Caco-2 (cell line): ENCODE measurements at regions of chr19 and their contacts with region 1.

Region 1: DNA sequence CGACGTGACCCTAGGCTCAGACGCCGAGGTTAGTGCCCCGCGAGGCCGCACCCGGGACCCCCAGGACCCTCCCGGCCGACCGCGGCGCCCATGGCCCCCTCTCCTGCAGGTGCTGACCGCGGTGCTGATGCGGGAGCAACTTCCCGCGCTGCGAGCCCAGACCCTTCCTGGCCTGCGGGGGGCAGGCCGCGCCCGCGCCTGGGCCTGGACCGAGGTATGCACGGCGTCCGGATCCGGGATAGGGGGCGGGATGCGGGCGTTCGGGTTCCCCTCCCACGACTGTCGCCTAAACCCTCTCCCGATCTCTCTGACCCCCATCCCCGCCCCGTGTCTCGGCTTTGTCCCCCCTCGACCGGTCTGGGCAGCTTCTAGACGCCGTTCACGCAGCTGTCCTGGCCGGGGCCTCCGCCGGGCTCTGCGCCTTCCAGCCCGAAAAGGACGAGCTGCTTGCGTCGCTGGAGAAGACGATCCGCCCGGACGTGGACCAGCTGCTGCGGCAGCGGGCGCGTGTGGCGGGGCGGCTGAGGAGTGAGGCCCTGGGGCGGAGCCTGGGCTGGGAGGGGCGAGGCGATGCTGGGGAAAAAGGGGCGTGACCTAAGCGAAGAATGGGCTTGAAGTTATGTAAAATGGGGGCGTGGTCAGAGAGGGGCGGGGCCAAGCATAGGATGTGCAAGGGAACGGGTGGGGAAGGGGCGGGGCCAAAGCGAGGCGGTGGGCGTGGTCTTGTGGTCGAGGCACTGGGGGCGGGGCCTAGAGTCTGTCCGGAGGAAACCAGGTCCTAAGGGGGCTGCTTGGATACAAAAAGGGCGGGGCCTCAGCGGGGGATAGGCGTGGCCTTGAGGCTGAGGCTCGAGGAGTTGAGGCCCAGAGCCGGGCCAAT is 16.0 kb upstream of the COLGALT1 start:
- DNase-seq: peak; percentile 94 to 97
- H3K4me3 ChIP-seq: peak overlapping the region; percentile 53
- H3K4me3 Mint-ChIP-seq: peak overlapping the region; percentile 80
- H3K27ac Mint-ChIP-seq: no peak overlapping the region
- H3K4me1 ChIP-seq: no peaks in the 10 kb centered on the region
- H3K4me1 Mint-ChIP-seq: peaks cover 7% of the 10 kb centered on the region
- H3K27me3 ChIP-seq: no peaks in the 10 kb centered on the region; the same call in none of the 2 replicates
- H3K27me3 Mint-ChIP-seq: no peaks in the 10 kb centered on the region
- CTCF ChIP-seq: peak; percentile 26 to 71

Region 2: DNA sequence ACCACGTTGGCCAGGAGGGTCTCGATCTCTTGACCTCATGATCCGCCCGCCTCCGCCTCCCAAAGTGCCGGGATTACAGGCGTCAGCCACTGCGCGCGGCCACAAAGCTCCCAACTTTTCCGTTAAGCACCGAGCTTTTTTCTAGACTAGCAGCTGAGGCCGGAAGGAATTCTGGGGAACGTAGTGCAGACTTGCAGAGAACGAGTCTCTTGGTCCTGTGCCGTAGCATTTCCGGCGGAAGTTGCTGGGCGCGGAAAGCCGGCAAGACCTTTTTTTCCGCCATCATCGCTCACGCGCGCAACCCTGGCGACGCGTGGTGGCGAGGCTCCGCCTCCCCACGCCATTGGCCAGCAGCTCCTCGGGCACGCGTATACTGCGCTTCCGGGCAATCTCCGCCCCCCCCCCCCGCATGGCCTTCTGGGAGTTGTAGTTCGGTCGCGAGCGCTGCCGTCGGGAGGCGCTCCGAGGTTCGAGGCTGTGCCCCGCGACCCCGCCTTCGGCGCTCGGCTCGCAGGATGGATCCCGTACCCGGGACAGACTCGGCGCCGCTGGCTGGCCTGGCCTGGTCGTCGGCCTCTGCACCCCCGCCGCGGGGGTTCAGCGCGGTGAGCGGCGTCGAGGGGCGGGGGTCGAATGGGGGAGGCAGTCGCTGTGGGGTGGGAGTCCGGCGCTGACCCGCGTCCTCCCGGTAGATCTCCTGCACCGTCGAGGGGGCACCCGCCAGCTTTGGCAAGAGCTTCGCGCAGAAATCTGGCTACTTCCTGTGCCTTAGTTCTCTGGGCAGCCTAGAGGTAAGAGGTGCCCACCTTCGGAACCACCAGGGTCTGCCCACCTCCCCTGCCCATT is 119.6 kb before region 1 on chr19 and contains the start of gene MVB12A:
- CTCF ChIA-PET with region 1: no interaction called
- POLR2A ChIA-PET with region 1: no interaction called
- intact Hi-C with region 1: no loop called
- DNase-seq: peak; percentile 95 to 97
- H3K4me3 ChIP-seq: peak within 1 kb of the TSS; percentile 85
- H3K4me3 Mint-ChIP-seq: peak within 1 kb of the TSS; percentile 85
- H3K27ac Mint-ChIP-seq: peak within 1 kb of the TSS; percentile 89
- H3K4me1 ChIP-seq: peaks cover 8% of the 10 kb centered on the region; the same call in 1 of the 2 replicates
- H3K4me1 Mint-ChIP-seq: peaks cover 11% of the 10 kb centered on the region
- H3K27me3 ChIP-seq: no peaks in the 10 kb centered on the region
- H3K27me3 Mint-ChIP-seq: no peaks in the 10 kb centered on the region
- CTCF ChIP-seq: no peak
- total RNA-seq, gene MVB12A: 36.7 and 37.6 TPM in 2 replicates

Region 3: DNA sequence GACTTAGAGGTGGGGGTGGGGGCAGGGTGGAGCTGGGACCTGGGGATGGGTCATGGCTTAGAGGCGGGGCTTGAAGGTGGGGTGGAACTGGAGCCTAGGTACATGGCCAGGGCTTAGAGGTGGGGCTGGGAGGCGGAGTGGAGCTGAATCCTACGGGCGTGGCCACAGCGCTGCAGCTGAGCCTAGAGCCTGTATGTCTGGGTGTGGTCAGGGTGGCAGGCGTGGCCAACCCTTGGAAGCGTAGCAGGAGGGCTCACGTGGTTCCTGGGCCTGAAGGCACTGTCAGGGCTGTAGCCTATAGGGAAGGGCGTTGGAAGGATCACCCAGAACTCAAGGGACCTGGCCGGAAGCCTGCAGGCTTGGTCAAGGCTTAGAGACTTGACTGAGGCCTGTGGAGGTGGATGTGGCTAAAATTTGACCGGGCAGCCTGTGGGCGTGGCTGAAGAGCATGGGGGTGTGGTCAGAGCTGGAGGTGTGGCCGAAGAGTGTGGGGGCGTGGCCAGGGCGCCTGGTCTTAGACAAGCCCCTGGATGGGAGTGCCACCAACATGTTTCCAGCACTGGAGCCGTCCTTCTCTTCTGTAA is 40.3 kb after region 1 on chr19:
- CTCF ChIA-PET with region 1: interaction called, 3 read pairs
- POLR2A ChIA-PET with region 1: no interaction called
- intact Hi-C with region 1: loop called (anchors 1 kb)
- DNase-seq: peak; percentile 69 to 72
- H3K4me3 ChIP-seq: no peak overlapping the region
- H3K4me3 Mint-ChIP-seq: no peak overlapping the region
- H3K27ac Mint-ChIP-seq: no peak overlapping the region
- H3K4me1 ChIP-seq: no peaks in the 10 kb centered on the region
- H3K4me1 Mint-ChIP-seq: peaks cover 7% of the 10 kb centered on the region
- H3K27me3 ChIP-seq: no peaks in the 10 kb centered on the region
- H3K27me3 Mint-ChIP-seq: no peaks in the 10 kb centered on the region
- CTCF ChIP-seq: no peak

Region 4: GRCh38 chr19:18785179-18786128 is 1246.0 kb after region 1 on chr19:
- CTCF ChIA-PET with region 1: no interaction called
- POLR2A ChIA-PET with region 1: no interaction called
- intact Hi-C with region 1: no loop called
- DNase-seq: peak; percentile 80 to 88
- H3K4me3 ChIP-seq: no peak overlapping the region
- H3K4me3 Mint-ChIP-seq: peak overlapping the region; percentile 57
- H3K27ac Mint-ChIP-seq: no peak overlapping the region
- H3K4me1 ChIP-seq: peaks cover 8% of the 10 kb centered on the region; the same call in 1 of the 2 replicates
- H3K4me1 Mint-ChIP-seq: peaks cover 18% of the 10 kb centered on the region
- H3K27me3 ChIP-seq: peaks cover 2% of the 10 kb centered on the region
- H3K27me3 Mint-ChIP-seq: peaks cover 17% of the 10 kb centered on the region
- CTCF ChIP-seq: no peak